OCI-LY7 (cell line): ENCODE measurements at regions of chr7 and their contacts with region 1.

Region 1: DNA sequence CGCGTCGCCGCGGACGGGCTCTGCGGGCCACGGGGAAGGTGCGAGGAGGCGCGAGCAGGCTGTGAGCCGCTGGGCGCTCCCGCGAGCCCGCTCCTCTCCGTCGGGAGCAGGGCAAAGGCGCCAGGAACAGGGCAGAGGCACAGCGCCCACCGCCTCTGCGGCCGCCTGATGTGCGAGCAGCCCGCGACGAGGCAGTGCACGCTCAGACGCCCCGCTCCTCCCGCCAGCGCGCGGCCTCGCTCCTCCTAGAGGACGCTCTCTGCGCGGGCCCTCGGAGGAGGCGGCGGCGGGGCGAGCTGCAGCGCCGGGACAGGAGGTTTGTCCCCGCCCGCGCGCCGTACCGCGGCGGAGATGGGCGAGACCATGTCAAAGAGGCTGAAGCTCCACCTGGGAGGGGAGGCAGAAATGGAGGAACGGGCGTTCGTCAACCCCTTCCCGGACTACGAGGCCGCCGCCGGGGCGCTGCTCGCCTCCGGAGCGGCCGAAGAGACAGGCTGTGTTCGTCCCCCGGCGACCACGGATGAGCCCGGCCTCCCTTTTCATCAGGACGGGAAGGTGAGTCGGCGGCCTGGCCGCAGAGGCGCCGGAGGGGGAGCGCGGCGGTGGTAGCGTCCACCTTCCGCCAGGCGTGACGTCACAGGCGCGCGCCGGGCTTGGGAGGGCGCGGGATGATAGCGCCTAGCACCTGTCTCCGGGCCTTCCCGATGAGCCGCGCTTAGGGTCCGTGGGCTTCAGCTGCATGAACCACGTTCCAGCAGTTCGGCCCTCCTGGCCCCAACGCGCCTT is 731 bp downstream of the LANCL2 start:
- DNase-seq: peak; percentile 96
- H3K4me3 ChIP-seq: peak overlapping the region; percentile 82
- H3K27ac ChIP-seq: peak overlapping the region; percentile 78
- H3K4me1 ChIP-seq: peaks cover 19% of the 10 kb centered on the region
- CTCF ChIP-seq: 0 out of 2 replicates have a peak, but pooled peaks have one; percentile 36

Region 2: DNA sequence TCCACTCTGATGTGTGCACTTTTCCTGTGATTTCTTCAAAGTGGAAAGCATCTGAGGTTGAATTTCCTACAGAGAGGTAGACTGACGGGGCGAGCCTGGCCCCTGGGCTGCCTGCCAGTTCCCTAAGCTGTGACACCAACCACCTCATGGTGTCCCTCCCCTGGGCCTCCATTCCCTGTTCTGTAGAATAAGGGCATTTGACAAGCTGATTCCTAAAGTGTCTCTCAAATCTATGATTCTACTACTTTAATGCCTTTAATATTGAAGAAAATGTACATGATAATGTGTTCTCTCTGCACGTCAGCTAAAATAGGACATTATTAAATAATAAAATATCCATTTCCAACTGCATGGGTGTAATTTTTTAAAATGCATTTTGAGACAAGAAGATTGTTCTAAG is 712.0 kb before region 1 on chr7:
- CTCF ChIA-PET with region 1: no interaction called
- POLR2A ChIA-PET with region 1: no interaction called
- intact Hi-C with region 1: no loop called
- DNase-seq: no peak
- H3K4me3 ChIP-seq: no peak overlapping the region
- H3K27ac ChIP-seq: no peak overlapping the region
- H3K4me1 ChIP-seq: no peaks in the 10 kb centered on the region
- CTCF ChIP-seq: no peak

Region 3: DNA sequence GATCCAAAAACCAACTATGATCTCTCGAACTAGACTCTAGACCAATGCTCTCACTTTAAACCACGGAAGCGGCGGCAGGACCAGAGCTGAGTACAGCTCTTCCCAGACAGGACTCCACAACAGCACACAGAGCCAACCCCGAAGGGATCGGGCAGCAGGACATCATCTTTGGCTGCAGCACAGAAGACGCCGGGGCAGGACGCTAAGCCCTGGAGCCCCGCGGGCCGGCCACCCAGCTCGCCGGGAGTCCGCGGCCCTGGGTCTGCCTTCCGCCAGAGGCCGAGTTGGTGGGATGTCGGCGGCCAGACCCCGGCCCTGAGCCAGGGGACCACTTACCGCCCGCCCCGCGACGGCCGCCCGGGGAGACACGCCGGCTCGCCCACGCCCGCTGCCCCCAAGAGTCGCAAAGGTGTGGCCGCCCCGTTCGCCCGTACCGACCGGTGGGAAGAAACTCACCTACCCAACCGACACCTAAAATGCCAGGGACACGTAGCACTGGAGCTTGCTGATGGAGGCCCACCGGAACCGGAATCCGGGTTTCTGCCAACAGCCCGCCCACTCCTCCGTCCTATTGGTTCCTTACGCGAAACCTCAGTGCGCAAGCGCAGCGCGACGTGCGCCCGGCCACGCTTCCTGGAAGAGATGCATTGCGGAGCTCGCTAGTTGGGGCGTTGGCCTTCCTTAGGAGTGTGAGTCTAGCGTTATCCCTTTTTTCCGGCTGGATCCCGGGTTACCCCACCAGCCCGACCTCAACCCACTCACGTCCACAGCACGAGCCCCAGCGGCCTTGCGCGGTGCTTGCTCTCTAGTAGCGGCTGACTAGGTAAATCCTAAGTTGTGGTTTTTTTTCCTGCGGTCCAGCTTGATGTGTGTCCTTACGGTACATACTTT is 606.9 kb before region 1 on chr7 and contains the start of gene SEC61G:
- CTCF ChIA-PET with region 1: no interaction called
- POLR2A ChIA-PET with region 1: no interaction called
- intact Hi-C with region 1: loop called (anchors 5 kb)
- DNase-seq: peak; percentile 96
- H3K4me3 ChIP-seq: peak within 1 kb of the TSS; percentile 100
- H3K27ac ChIP-seq: peak within 1 kb of the TSS; percentile 54
- H3K4me1 ChIP-seq: peaks cover 20% of the 10 kb centered on the region
- CTCF ChIP-seq: no peak
- total RNA-seq, gene SEC61G: 79.6 and 88.7 TPM in 2 replicates

Region 4: DNA sequence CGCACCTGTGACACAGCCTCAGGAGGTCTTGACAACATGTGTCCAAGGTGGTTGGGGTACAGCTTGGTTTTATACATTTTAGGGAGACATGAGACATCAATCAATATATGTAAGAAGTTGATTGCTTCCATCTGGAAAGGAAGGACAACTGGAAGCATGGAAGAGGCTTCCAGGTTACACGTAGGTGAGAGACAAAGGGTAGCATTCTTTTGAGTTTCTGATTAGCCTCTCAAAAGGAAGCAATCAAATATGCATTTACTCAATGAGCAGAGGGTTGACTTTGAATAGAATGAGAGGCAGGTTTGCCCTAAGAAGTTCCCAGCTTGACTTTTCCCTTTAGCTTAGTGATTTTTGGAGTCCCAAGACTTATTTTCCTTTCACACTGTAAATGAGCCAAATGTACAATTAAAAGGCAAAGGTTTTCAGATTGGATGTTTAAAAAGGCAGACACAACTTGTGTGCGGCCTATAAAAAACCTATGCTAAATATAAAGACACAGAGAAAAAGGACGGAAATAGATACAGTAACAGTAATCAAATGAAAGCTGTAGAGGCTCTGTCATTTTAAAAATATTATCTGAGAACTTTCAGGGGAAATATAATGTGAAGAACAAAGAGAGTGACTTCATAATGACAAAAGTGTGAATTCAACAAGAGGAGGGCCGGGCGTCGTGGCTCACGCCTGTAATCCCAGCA is 66.4 kb before region 1 on chr7:
- CTCF ChIA-PET with region 1: no interaction called
- POLR2A ChIA-PET with region 1: no interaction called
- intact Hi-C with region 1: no loop called
- DNase-seq: no peak
- H3K4me3 ChIP-seq: no peak overlapping the region
- H3K27ac ChIP-seq: no peak overlapping the region
- H3K4me1 ChIP-seq: no peaks in the 10 kb centered on the region
- CTCF ChIP-seq: no peak

Region 5: GRCh38 chr7:55405856-55406541 is 40.1 kb after region 1 on chr7:
- CTCF ChIA-PET with region 1: no interaction called
- POLR2A ChIA-PET with region 1: no interaction called
- intact Hi-C with region 1: loop called (anchors 1 kb)
- DNase-seq: no peak
- H3K4me3 ChIP-seq: no peak overlapping the region
- H3K27ac ChIP-seq: peak overlapping the region; percentile 53
- H3K4me1 ChIP-seq: peaks cover 10% of the 10 kb centered on the region
- CTCF ChIP-seq: no peak

Region 6: GRCh38 chr7:55534175-55534915 is 168.5 kb after region 1 on chr7:
- CTCF ChIA-PET with region 1: no interaction called
- POLR2A ChIA-PET with region 1: interaction called, 4 read pairs
- intact Hi-C with region 1: loop called (anchors 10 kb)
- DNase-seq: peak; percentile 96
- H3K4me3 ChIP-seq: peak overlapping the region; percentile 58
- H3K27ac ChIP-seq: peak overlapping the region; percentile 100
- H3K4me1 ChIP-seq: peaks cover 96% of the 10 kb centered on the region
- CTCF ChIP-seq: no peak

Region 7: DNA sequence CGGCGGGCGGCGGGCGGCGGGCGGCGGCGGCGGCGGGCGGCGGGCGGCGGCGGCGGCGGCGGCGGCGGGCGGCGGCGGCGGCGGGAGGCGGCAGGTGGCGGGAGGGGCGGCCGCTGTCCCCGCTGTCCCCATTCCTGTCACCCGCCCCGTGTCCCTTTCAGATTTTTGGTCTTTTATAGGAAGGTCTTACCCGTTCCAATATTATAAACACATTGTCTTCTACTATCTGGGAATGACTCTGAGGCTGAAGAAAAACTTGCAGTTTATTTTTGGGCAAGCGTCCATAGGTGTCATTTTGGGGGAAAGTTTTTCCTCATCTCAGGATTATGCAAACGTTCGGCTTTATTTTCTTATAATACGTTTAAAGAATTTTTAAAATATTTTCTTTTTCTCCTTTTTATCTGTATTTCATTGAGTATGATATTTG is 522.0 kb after region 1 on chr7:
- CTCF ChIA-PET with region 1: no interaction called
- POLR2A ChIA-PET with region 1: no interaction called
- intact Hi-C with region 1: loop called (anchors 2 kb)
- DNase-seq: peak; percentile 14
- H3K4me3 ChIP-seq: peak overlapping the region; percentile 68
- H3K27ac ChIP-seq: peak overlapping the region; percentile 23
- H3K4me1 ChIP-seq: peaks cover 3% of the 10 kb centered on the region
- CTCF ChIP-seq: no peak

Region 8: GRCh38 chr7:56106108-56107073 is 740.5 kb after region 1 on chr7 and contains the start of gene CHCHD2:
- CTCF ChIA-PET with region 1: no interaction called
- POLR2A ChIA-PET with region 1: no interaction called
- intact Hi-C with region 1: loop called (anchors 5 kb)
- DNase-seq: peak; percentile 99
- H3K4me3 ChIP-seq: peak within 1 kb of the TSS; percentile 81
- H3K27ac ChIP-seq: peak within 1 kb of the TSS; percentile 54
- H3K4me1 ChIP-seq: peaks cover 35% of the 10 kb centered on the region
- CTCF ChIP-seq: no peak
- total RNA-seq, gene CHCHD2: 381 and 517 TPM in 2 replicates